PC-3 (cell line): ENCODE measurements at regions of chr5 and their contacts with region 1.

Region 1: DNA sequence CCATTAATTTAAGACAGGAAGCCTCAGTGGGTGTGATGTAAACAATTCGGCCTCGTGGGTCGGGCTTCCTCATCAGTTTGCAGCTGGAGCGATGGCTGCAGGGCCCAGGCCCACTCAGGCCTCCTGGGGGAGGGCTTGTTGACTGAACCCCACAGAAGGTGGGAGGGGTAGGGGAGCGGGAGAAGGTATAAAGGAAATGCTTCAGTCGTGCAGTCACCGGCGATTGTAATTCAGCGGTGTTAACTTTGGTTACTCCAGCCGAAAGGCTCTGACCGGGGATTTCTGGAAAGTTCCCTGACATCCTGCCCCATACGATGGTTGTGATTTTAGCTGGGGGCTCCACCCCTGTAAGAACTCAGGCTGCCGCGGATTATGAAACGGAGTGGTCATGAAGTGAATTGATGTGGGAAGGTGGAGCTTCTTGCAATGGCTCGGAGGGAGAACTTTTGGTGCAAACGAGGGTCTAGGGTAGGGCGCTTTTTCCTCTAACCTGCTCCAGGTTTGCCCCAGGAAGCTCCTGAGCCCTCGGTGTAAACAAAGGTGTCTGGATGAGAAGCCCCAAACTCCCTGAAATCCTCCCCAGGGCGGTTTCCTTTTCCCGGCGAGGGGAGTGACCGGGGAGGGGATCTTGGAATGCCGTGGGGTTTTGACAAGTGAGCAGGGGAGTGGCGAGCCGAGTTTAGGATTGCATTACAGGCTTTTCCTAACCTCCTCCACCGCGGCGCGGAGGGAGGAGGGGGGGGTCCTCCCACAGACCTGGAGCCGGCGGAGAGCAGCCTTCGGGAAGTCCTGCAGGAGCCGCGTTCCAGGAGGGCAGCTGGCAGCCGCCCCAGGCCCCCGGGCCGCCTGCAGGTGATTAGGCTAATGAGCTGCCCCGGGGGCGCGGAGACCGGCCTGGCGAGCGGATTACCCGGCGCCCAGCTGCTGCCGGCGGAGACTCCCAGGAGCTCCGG is 215.5 kb downstream of the PDZD2 start:
- DNase-seq: peak; percentile 81
- ATAC-seq: peak; percentile 74
- H3K4me3 ChIP-seq: peak overlapping the region; percentile 79
- H3K27ac ChIP-seq: peak overlapping the region; percentile 69
- H3K4me1 ChIP-seq: peaks cover 20% of the 10 kb centered on the region
- H3K27me3 ChIP-seq: no peaks in the 10 kb centered on the region
- CTCF ChIP-seq: no peak

Region 2: DNA sequence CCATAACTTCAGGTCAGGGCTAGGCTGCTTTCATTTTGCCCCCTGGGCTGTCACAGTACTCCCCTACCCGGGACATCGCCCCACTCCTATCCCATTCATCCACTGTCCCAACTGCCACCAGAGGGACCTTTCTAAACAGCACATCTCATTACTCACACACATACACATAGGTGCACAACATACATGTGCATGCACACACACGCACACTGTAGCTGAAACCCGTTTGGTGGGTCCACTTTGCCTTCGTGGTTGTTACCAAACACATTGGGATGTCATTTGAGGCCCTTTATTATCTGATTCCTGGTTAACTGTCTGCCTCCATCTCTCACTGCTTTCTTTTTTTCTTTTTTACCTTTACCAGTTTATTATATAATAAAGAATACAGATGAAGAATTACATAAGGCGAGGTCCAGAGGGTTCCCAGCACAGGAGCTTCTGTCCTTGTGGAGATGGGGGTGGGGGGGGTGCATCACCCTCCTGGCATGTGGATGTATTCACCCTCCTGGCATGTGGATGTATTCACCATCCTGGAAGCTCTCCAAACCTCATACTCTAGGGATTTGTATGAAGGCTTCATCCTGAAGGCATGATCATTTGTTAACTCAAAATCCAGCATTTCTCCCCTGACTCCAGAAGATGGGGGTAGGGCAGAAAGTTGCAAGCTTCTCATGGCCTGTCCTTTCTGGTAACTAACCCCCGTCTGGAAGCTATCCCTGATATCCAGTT is 133.7 kb after region 1 on chr5:
- CTCF ChIA-PET with region 1: no interaction called
- POLR2A ChIA-PET with region 1: no interaction called
- intact Hi-C with region 1: loop called (anchors 10 kb)
- DNase-seq: peak; percentile 99
- ATAC-seq: peak; percentile 84
- H3K4me3 ChIP-seq: no peak overlapping the region
- H3K27ac ChIP-seq: peak overlapping the region; percentile 46
- H3K4me1 ChIP-seq: peaks cover 45% of the 10 kb centered on the region
- H3K27me3 ChIP-seq: no peaks in the 10 kb centered on the region
- CTCF ChIP-seq: no peak

Region 3: GRCh38 chr5:32057162-32058096 is 203.0 kb after region 1 on chr5:
- CTCF ChIA-PET with region 1: interaction called, 3 read pairs
- POLR2A ChIA-PET with region 1: no interaction called
- intact Hi-C with region 1: loop called (anchors 1 kb)
- DNase-seq: peak; percentile 79
- ATAC-seq: peak; percentile 36; the same call in 1 of the 2 replicates
- H3K4me3 ChIP-seq: no peak overlapping the region
- H3K27ac ChIP-seq: peak overlapping the region; percentile 72
- H3K4me1 ChIP-seq: peaks cover 55% of the 10 kb centered on the region
- H3K27me3 ChIP-seq: no peaks in the 10 kb centered on the region
- CTCF ChIP-seq: peak; percentile 58

Region 4: GRCh38 chr5:32076699-32077695 is 222.5 kb after region 1 on chr5:
- CTCF ChIA-PET with region 1: interaction called, 12 read pairs
- POLR2A ChIA-PET with region 1: no interaction called
- intact Hi-C with region 1: loop called (anchors 1 kb)
- DNase-seq: peak; percentile 80
- ATAC-seq: peak; percentile 50
- H3K4me3 ChIP-seq: no peak overlapping the region
- H3K27ac ChIP-seq: no peak overlapping the region
- H3K4me1 ChIP-seq: peaks cover 2% of the 10 kb centered on the region
- H3K27me3 ChIP-seq: no peaks in the 10 kb centered on the region
- CTCF ChIP-seq: peak; percentile 97